MCF 10A (cell line): ENCODE measurements at regions of chr12 and their contacts with region 1.

Region 1: GRCh38 chr12:4496145-4496838 is 42.4 kb upstream of the RAD51AP1 start:
- DNase-seq: no peak
- H3K4me3 Mint-ChIP-seq: no peak overlapping the region
- H3K27ac Mint-ChIP-seq: no peak overlapping the region
- H3K4me1 Mint-ChIP-seq: peaks cover 6% of the 10 kb centered on the region
- H3K27me3 Mint-ChIP-seq: no peaks in the 10 kb centered on the region
- CTCF ChIP-seq: no peak

Region 2: GRCh38 chr12:4483885-4484823 is 12.1 kb before region 1 on chr12:
- CTCF ChIA-PET with region 1: interaction called, 5 read pairs
- POLR2A ChIA-PET with region 1: interaction called, 20 read pairs
- intact Hi-C with region 1: no loop called
- DNase-seq: peak; percentile 59
- H3K4me3 Mint-ChIP-seq: no peak overlapping the region
- H3K27ac Mint-ChIP-seq: peak overlapping the region; percentile 14
- H3K4me1 Mint-ChIP-seq: peaks cover 22% of the 10 kb centered on the region
- H3K27me3 Mint-ChIP-seq: no peaks in the 10 kb centered on the region
- CTCF ChIP-seq: no peak

Region 3: GRCh38 chr12:4615667-4616066 is 119.4 kb after region 1 on chr12:
- CTCF ChIA-PET with region 1: no interaction called
- POLR2A ChIA-PET with region 1: no interaction called
- intact Hi-C with region 1: no loop called
- DNase-seq: no peak
- H3K4me3 Mint-ChIP-seq: no peak overlapping the region
- H3K27ac Mint-ChIP-seq: no peak overlapping the region
- H3K4me1 Mint-ChIP-seq: no peaks in the 10 kb centered on the region
- H3K27me3 Mint-ChIP-seq: no peaks in the 10 kb centered on the region
- CTCF ChIP-seq: no peak